Activated T-helper 1 cell treated with anti-CD3 and anti-CD28 coated beads, Interleukin-12 subunit alpha, Interleukin-12 subunit beta, Interleukin-2, Interleukin-4 antibody, amounts not matched to agents 30 ng/mL and 10 ng/mL and 1 ng/mL, durations not matched to agents 14 hours and 24 hours and 36 hours (primary cell): ENCODE measurements at regions of chr14 and their contacts with region 1.

Region 1: DNA sequence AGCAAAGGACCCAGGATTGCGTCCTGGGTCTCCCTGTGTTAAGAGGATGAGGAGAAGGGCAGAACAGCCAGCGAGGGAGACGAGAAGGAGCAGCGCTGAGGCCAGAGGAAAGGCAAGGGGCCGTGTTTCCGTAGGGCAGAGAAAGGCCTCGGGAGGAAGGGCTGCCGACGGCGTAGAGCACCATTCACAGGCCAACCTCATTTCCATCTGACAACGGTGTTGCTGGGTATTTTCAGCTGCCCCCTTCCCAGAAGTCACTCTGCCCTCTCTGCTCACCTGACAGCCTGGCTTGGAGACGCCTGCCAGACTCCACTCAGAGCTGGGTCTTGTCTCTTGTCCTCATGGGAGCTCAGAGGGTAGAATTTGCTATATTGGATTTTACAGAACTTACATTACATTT is 51.4 kb downstream of the GPR68 start:
- DNase-seq: no peak
- H3K4me3 Mint-ChIP-seq: no peak overlapping the region
- H3K27ac Mint-ChIP-seq: no peak overlapping the region
- H3K4me1 Mint-ChIP-seq: peaks cover 43% of the 10 kb centered on the region
- H3K27me3 Mint-ChIP-seq: no peaks in the 10 kb centered on the region

Region 2: DNA sequence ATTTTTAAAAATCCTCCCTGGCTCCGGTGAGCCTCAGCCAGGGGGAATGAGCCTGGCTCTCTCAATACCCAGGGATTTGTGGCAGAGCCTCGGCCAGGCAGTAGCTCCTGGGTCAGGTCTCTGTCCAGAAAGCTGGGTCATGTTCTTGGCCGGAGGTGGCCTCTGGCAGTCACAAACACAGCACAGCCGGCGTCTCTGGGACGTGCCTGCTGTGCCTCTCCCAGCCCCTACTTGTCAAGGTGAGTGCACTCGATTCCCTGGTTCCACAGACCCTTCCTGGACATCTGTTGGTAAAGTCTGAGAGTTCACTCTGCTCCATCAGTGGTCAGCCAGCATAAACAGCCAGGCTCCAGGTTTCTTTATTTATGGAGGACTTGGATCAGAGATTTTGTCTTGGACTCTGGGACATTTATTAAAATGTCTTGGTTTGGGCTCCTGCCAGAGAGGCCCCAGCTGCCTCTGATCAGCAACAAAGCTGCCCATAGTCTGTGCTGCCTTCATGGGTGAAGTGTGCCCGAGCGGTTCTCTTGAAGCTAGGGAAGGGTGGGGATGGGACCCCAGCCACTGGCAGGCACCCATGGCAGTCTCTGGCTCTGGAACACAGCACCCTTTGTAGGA is 22.5 kb before region 1 on chr14:
- intact Hi-C with region 1: no loop called
- DNase-seq: no peak
- H3K4me3 Mint-ChIP-seq: no peak overlapping the region
- H3K27ac Mint-ChIP-seq: no peak overlapping the region
- H3K4me1 Mint-ChIP-seq: peaks cover 16% of the 10 kb centered on the region
- H3K27me3 Mint-ChIP-seq: no peaks in the 10 kb centered on the region

Region 3: DNA sequence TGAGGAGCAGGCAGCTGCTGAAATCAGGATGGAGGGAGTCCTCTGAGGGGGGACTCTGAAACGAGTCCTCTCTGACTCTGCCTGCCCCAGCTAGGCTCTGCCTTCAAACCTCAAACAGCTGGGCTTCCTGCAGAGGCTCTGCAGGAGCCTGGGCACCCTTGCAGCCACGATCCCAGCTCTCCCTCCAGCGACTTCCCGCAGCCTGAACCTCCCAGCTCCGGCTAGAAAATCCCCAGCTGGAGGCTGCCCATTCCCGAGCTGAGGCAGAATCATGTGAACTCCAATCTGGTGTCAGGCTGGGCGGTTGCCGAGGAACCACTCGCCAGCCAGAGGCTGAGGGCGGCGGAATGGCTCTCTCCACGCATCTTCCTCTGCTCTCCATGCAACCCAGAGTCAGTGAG is 51.4 kb after region 1 on chr14 and contains the start of gene GPR68:
- intact Hi-C with region 1: loop called (anchors 1 kb)
- DNase-seq: no peak
- H3K4me3 Mint-ChIP-seq: peak within 1 kb of the TSS; percentile 85
- H3K27ac Mint-ChIP-seq: peak within 1 kb of the TSS; percentile 88
- H3K4me1 Mint-ChIP-seq: peaks cover 89% of the 10 kb centered on the region
- H3K27me3 Mint-ChIP-seq: no peaks in the 10 kb centered on the region
- total RNA-seq, gene GPR68: 4.5 and 5.4 TPM in 2 replicates

Region 4: GRCh38 chr14:91286530-91286937 is 93.5 kb after region 1 on chr14:
- intact Hi-C with region 1: loop called (anchors 1 kb)
- DNase-seq: peak; percentile 66
- H3K4me3 Mint-ChIP-seq: no peak overlapping the region
- H3K27ac Mint-ChIP-seq: peak overlapping the region; percentile 32
- H3K4me1 Mint-ChIP-seq: peaks cover 25% of the 10 kb centered on the region
- H3K27me3 Mint-ChIP-seq: no peaks in the 10 kb centered on the region

Region 5: DNA sequence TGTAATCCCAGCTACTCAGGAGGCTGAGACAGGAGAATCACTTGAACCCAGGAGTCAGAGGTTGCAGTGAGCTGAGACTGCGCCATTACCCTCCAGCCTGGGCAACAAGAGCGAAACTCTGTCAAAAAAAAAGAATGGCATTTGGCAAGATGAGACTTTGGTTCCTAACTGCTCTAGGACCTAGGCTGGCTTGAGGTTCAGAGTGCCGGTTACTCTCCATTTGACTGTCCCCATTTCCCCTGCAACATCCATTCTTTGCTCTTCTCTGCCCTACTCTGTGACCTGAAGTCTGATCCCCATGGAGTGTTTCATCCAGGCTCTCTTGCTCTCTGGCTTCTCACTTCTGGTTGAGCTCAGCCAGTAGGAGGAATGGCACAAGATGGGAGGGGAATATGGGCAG is 343.3 kb after region 1 on chr14:
- intact Hi-C with region 1: no loop called
- DNase-seq: no peak
- H3K4me3 Mint-ChIP-seq: no peak overlapping the region
- H3K27ac Mint-ChIP-seq: no peak overlapping the region
- H3K4me1 Mint-ChIP-seq: no peaks in the 10 kb centered on the region
- H3K27me3 Mint-ChIP-seq: peaks cover 8% of the 10 kb centered on the region